Naive thymus-derived CD4-positive, alpha-beta T cell (primary cell): ENCODE measurements at regions of chr4 and their contacts with region 1.

Region 1: GRCh38 chr4:73222466-73223257 is 35.9 kb downstream of the ANKRD17 start:
- DNase-seq: peak in 8 of 9 donors; percentile 39 to 90 (median 82)
- ATAC-seq: peak; percentile 100
- H3K4me3 ChIP-seq: peak overlapping the region; percentile 62
- H3K4me3 Mint-ChIP-seq: no peak overlapping the region
- H3K27ac ChIP-seq: peak overlapping the region; percentile 86
- H3K27ac Mint-ChIP-seq: no peak overlapping the region
- H3K4me1 ChIP-seq: peaks cover 9 to 18% of the 10 kb centered on the region in 2 donors
- H3K4me1 Mint-ChIP-seq: peaks cover 19 to 62% (median 54%) of the 10 kb centered on the region in 7 donors
- H3K27me3 ChIP-seq: no peaks in the 10 kb centered on the region
- H3K27me3 Mint-ChIP-seq: no peaks in the 10 kb centered on the region

Region 2: GRCh38 chr4:72846280-72847111 is 376.2 kb before region 1 on chr4:
- CTCF ChIA-PET with region 1: no interaction called
- POLR2A ChIA-PET with region 1: no interaction called
- intact Hi-C with region 1: no loop called
- DNase-seq: no peak
- ATAC-seq: no peak
- H3K4me3 ChIP-seq: no peak overlapping the region
- H3K4me3 Mint-ChIP-seq: no peak overlapping the region
- H3K27ac ChIP-seq: no peak overlapping the region
- H3K27ac Mint-ChIP-seq: no peak overlapping the region
- H3K4me1 ChIP-seq: no peaks in the 10 kb centered on the region
- H3K4me1 Mint-ChIP-seq: no peaks in the 10 kb centered on the region
- H3K27me3 ChIP-seq: no peaks in the 10 kb centered on the region
- H3K27me3 Mint-ChIP-seq: peaks cover 0 to 27% (median 9%) of the 10 kb centered on the region in 5 donors

Region 3: GRCh38 chr4:73021634-73022033 is 201.0 kb before region 1 on chr4:
- CTCF ChIA-PET with region 1: no interaction called
- POLR2A ChIA-PET with region 1: no interaction called
- intact Hi-C with region 1: no loop called
- DNase-seq: no peak
- ATAC-seq: no peak
- H3K4me3 ChIP-seq: no peak overlapping the region
- H3K4me3 Mint-ChIP-seq: no peak overlapping the region
- H3K27ac ChIP-seq: no peak overlapping the region
- H3K27ac Mint-ChIP-seq: no peak overlapping the region
- H3K4me1 ChIP-seq: no peaks in the 10 kb centered on the region
- H3K4me1 Mint-ChIP-seq: peaks cover 0 to 4% (median 0%) of the 10 kb centered on the region in 7 donors
- H3K27me3 ChIP-seq: no peaks in the 10 kb centered on the region
- H3K27me3 Mint-ChIP-seq: peaks cover 0 to 11% (median 5%) of the 10 kb centered on the region in 5 donors

Region 4: GRCh38 chr4:73069338-73070073 is 153.2 kb before region 1 on chr4 and contains the start of gene COX18:
- CTCF ChIA-PET with region 1: no interaction called
- POLR2A ChIA-PET with region 1: interaction called, 10 read pairs
- intact Hi-C with region 1: loop called (anchors 1 kb)
- DNase-seq: peak; percentile 90 to 93 (median 91)
- ATAC-seq: peak; percentile 87
- H3K4me3 ChIP-seq: peak within 1 kb of the TSS; percentile 79
- H3K4me3 Mint-ChIP-seq: peak within 1 kb of the TSS; percentile 86 to 97 (median 90)
- H3K27ac ChIP-seq: peak within 1 kb of the TSS; percentile 98
- H3K27ac Mint-ChIP-seq: peak within 1 kb of the TSS; percentile 93 to 99 (median 98)
- H3K4me1 ChIP-seq: peaks cover 25 to 29% of the 10 kb centered on the region in 2 donors
- H3K4me1 Mint-ChIP-seq: peaks cover 24 to 46% (median 39%) of the 10 kb centered on the region in 7 donors
- H3K27me3 ChIP-seq: no peaks in the 10 kb centered on the region
- H3K27me3 Mint-ChIP-seq: no peaks in the 10 kb centered on the region
- total RNA-seq, gene COX18: 11.1 to 18.4 (median 14.0) TPM

Region 5: DNA sequence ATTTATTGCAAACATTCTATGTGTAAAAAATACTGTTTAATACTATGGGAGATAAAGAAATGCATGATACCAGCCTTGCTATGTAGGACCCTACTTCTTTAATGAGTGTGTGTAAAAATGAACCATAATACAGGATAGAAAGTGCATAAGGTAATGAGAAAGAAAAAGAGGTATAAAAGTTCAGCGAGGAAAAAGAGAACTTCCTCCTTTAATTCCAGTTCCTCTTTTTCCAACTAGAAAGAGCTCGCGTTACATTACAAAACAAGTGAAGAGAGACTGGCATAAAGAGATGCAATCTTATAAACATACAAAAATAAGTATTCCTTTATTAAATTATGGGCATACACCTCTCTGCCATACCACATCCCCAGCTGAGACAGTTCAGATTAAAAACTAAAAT is 41.4 kb before region 1 on chr4:
- CTCF ChIA-PET with region 1: no interaction called
- POLR2A ChIA-PET with region 1: no interaction called
- intact Hi-C with region 1: no loop called
- DNase-seq: no peak
- ATAC-seq: no peak
- H3K4me3 ChIP-seq: no peak overlapping the region
- H3K4me3 Mint-ChIP-seq: no peak overlapping the region
- H3K27ac ChIP-seq: no peak overlapping the region
- H3K27ac Mint-ChIP-seq: peak overlapping the region in 2 of 9 donors; percentile 12 to 38
- H3K4me1 ChIP-seq: no peaks in the 10 kb centered on the region
- H3K4me1 Mint-ChIP-seq: peaks cover 14 to 54% (median 39%) of the 10 kb centered on the region in 7 donors
- H3K27me3 ChIP-seq: no peaks in the 10 kb centered on the region
- H3K27me3 Mint-ChIP-seq: no peaks in the 10 kb centered on the region

Region 6: GRCh38 chr4:73245955-73246354 is 23.3 kb after region 1 on chr4:
- CTCF ChIA-PET with region 1: no interaction called
- POLR2A ChIA-PET with region 1: no interaction called
- intact Hi-C with region 1: loop called in 1 of 2 experiments (anchors 2 kb)
- DNase-seq: no peak
- ATAC-seq: no peak
- H3K4me3 ChIP-seq: no peak overlapping the region
- H3K4me3 Mint-ChIP-seq: peak overlapping the region in 6 of 10 donors; percentile 0 to 40 (median 28)
- H3K27ac ChIP-seq: no peak overlapping the region
- H3K27ac Mint-ChIP-seq: peak overlapping the region in 5 of 9 donors; percentile 3 to 32 (median 16)
- H3K4me1 ChIP-seq: peaks cover 11 to 12% of the 10 kb centered on the region in 2 donors
- H3K4me1 Mint-ChIP-seq: peaks cover 36 to 91% (median 81%) of the 10 kb centered on the region in 7 donors
- H3K27me3 ChIP-seq: no peaks in the 10 kb centered on the region
- H3K27me3 Mint-ChIP-seq: no peaks in the 10 kb centered on the region